ENCODE measurements at regions of chr20 and their contacts with region 1.

Region 1: GRCh38 chr20:45771182-45771759 is 20.4 kb downstream of the WFDC3 start:
- DNase-seq: peak; percentile 88
- ATAC-seq: peak; percentile 75
- H3K4me3 Mint-ChIP-seq: no peak overlapping the region
- H3K27ac Mint-ChIP-seq: no peak overlapping the region
- H3K4me1 Mint-ChIP-seq: peaks cover 4% of the 10 kb centered on the region
- H3K27me3 Mint-ChIP-seq: peaks cover 12% of the 10 kb centered on the region

Region 2: GRCh38 chr20:45322952-45323383 is 448.3 kb before region 1 on chr20:
- CTCF ChIA-PET with region 1: interaction called, 22 read pairs
- POLR2A ChIA-PET with region 1: no interaction called
- intact Hi-C with region 1: loop called (anchors 1 to 5 kb)
- DNase-seq: no peak
- ATAC-seq: no peak
- H3K4me3 Mint-ChIP-seq: no peak overlapping the region
- H3K27ac Mint-ChIP-seq: no peak overlapping the region
- H3K4me1 Mint-ChIP-seq: peaks cover 24% of the 10 kb centered on the region
- H3K27me3 Mint-ChIP-seq: no peaks in the 10 kb centered on the region

Region 3: GRCh38 chr20:45436732-45437391 is 334.4 kb before region 1 on chr20:
- CTCF ChIA-PET with region 1: interaction called, 16 read pairs
- POLR2A ChIA-PET with region 1: no interaction called
- intact Hi-C with region 1: no loop called
- DNase-seq: peak; percentile 91
- ATAC-seq: peak; percentile 99
- H3K4me3 Mint-ChIP-seq: peak overlapping the region; percentile 69
- H3K27ac Mint-ChIP-seq: no peak overlapping the region
- H3K4me1 Mint-ChIP-seq: peaks cover 17% of the 10 kb centered on the region
- H3K27me3 Mint-ChIP-seq: no peaks in the 10 kb centered on the region

Region 4: GRCh38 chr20:45456632-45457031 is 314.6 kb before region 1 on chr20:
- CTCF ChIA-PET with region 1: interaction called, 34 read pairs
- POLR2A ChIA-PET with region 1: interaction called, 3 read pairs
- intact Hi-C with region 1: loop called (anchors 1 kb)
- DNase-seq: peak; percentile 75
- ATAC-seq: peak; percentile 81
- H3K4me3 Mint-ChIP-seq: no peak overlapping the region
- H3K27ac Mint-ChIP-seq: no peak overlapping the region
- H3K4me1 Mint-ChIP-seq: no peaks in the 10 kb centered on the region
- H3K27me3 Mint-ChIP-seq: peaks cover 2% of the 10 kb centered on the region

Region 5: GRCh38 chr20:45545754-45546453 is 225.4 kb before region 1 on chr20:
- CTCF ChIA-PET with region 1: interaction called, 5 read pairs
- POLR2A ChIA-PET with region 1: no interaction called
- intact Hi-C with region 1: loop called (anchors 1 to 2 kb)
- DNase-seq: no peak
- ATAC-seq: no peak
- H3K4me3 Mint-ChIP-seq: no peak overlapping the region
- H3K27ac Mint-ChIP-seq: no peak overlapping the region
- H3K4me1 Mint-ChIP-seq: no peaks in the 10 kb centered on the region
- H3K27me3 Mint-ChIP-seq: peaks cover 36% of the 10 kb centered on the region

Region 6: DNA sequence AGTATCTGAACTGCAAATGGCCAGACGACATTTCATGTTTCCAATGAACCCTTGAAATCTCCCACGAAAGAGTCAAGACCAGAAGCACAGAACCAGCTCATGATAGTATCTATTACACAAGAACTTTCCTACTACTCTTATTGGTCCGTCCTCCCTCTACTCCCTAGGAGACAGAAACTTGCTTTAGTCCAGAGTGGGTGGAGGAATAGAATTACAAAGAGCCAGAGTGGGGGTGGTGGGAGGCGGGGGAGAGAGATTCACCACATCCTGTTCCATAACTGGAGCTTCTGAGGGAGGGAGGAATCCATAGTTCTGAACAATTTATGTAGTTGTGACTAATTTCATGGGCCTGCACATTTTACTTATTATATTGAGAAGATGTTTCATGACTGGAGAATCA is 160.2 kb before region 1 on chr20:
- CTCF ChIA-PET with region 1: interaction called, 5 read pairs
- POLR2A ChIA-PET with region 1: interaction called, 14 read pairs
- intact Hi-C with region 1: no loop called
- DNase-seq: peak; percentile 79
- ATAC-seq: peak; percentile 93
- H3K4me3 Mint-ChIP-seq: no peak overlapping the region
- H3K27ac Mint-ChIP-seq: peak overlapping the region; percentile 47
- H3K4me1 Mint-ChIP-seq: peaks cover 23% of the 10 kb centered on the region
- H3K27me3 Mint-ChIP-seq: peaks cover 26% of the 10 kb centered on the region

Region 7: DNA sequence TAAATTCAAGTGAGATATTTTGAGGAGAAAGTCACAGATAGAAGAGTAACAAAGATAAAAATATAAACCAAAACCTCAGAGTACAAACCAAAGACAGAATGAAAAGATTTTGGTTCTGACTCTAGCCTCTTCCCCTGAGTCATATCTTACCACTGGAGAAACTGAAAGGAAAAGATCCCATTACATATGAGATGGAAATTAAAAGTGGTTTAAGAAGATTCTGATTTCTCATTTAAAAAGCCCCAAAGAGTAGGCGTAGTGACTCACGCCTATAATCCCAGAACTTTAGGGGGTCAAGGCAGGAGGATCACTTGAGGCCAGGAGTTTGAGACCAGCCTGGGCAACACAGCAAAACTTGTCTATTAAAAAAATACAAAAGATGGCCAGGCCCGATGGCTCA is 18.5 kb before region 1 on chr20:
- CTCF ChIA-PET with region 1: interaction called, 22 read pairs
- POLR2A ChIA-PET with region 1: no interaction called
- intact Hi-C with region 1: no loop called
- DNase-seq: peak; percentile 51
- ATAC-seq: peak; percentile 76
- H3K4me3 Mint-ChIP-seq: no peak overlapping the region
- H3K27ac Mint-ChIP-seq: peak overlapping the region; percentile 63
- H3K4me1 Mint-ChIP-seq: peaks cover 28% of the 10 kb centered on the region
- H3K27me3 Mint-ChIP-seq: peaks cover 21% of the 10 kb centered on the region

Region 8: DNA sequence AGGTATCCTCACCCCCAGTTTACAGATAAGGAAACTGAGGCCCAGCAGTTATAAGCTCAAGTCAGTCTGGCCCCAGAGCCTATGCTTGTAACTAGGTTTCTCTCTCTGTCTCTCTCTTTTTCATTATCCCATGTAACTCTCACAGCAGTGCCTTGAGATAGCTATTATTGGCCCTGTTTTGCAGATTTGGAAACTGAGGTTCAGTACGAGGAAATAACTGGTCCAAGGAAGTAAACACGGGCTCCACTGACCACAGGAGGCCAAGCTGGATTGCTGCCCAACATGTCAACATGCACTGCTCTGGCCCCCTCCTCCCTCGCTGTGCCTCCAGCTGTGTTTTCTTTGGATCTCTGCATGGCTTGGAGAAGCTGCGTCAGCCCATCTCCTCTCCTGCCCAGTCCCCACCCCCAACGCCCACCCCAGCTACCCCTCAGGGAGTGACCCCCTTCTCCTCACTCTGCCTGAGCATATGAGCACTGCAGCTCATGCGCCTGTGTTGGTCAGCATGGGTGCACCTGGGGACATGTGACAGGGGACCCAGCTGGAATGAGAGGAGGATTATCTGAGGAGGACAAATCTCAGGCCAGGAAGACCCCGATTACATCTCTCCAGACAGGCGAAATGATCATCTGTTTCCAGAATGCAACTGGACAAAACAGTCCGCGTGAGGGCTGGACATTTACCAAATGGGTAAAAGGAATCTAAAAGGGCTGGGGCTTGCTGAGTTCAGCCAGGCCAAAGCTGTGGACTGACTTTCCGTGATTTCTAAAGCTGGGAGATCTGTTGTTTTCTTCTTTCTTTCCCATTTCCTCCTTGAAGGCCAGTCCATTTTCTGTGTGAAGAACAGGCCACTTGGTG is 148.5 kb after region 1 on chr20:
- CTCF ChIA-PET with region 1: no interaction called
- POLR2A ChIA-PET with region 1: no interaction called
- intact Hi-C with region 1: no loop called
- DNase-seq: no peak
- ATAC-seq: no peak
- H3K4me3 Mint-ChIP-seq: no peak overlapping the region
- H3K27ac Mint-ChIP-seq: no peak overlapping the region
- H3K4me1 Mint-ChIP-seq: peaks cover 5% of the 10 kb centered on the region
- H3K27me3 Mint-ChIP-seq: peaks cover 16% of the 10 kb centered on the region

Region 9: GRCh38 chr20:46367967-46368901 is 597.0 kb after region 1 on chr20:
- CTCF ChIA-PET with region 1: no interaction called
- POLR2A ChIA-PET with region 1: no interaction called
- intact Hi-C with region 1: no loop called
- DNase-seq: peak; percentile 44
- ATAC-seq: no peak
- H3K4me3 Mint-ChIP-seq: no peak overlapping the region
- H3K27ac Mint-ChIP-seq: peak overlapping the region; percentile 65
- H3K4me1 Mint-ChIP-seq: peaks cover 48% of the 10 kb centered on the region
- H3K27me3 Mint-ChIP-seq: no peaks in the 10 kb centered on the region